Activated B cell treated with CpG ODN at 0.5 μM for 24 hours (primary cell): ENCODE measurements at regions of chr12 and their contacts with region 1.

Region 1: GRCh38 chr12:50167041-50167828 is at the start of gene CERS5:
- DNase-seq: peak; percentile 95
- ATAC-seq: peak; percentile 98
- H3K4me3 Mint-ChIP-seq: peak within 1 kb of the TSS; percentile 92
- H3K27ac Mint-ChIP-seq: peak within 1 kb of the TSS; percentile 90
- H3K4me1 Mint-ChIP-seq: peaks cover 25% of the 10 kb centered on the region
- H3K27me3 Mint-ChIP-seq: no peaks in the 10 kb centered on the region
- CTCF ChIP-seq: no peak
- total RNA-seq, gene CERS5: 44.3 and 64.9 TPM in 2 replicates

Region 2: DNA sequence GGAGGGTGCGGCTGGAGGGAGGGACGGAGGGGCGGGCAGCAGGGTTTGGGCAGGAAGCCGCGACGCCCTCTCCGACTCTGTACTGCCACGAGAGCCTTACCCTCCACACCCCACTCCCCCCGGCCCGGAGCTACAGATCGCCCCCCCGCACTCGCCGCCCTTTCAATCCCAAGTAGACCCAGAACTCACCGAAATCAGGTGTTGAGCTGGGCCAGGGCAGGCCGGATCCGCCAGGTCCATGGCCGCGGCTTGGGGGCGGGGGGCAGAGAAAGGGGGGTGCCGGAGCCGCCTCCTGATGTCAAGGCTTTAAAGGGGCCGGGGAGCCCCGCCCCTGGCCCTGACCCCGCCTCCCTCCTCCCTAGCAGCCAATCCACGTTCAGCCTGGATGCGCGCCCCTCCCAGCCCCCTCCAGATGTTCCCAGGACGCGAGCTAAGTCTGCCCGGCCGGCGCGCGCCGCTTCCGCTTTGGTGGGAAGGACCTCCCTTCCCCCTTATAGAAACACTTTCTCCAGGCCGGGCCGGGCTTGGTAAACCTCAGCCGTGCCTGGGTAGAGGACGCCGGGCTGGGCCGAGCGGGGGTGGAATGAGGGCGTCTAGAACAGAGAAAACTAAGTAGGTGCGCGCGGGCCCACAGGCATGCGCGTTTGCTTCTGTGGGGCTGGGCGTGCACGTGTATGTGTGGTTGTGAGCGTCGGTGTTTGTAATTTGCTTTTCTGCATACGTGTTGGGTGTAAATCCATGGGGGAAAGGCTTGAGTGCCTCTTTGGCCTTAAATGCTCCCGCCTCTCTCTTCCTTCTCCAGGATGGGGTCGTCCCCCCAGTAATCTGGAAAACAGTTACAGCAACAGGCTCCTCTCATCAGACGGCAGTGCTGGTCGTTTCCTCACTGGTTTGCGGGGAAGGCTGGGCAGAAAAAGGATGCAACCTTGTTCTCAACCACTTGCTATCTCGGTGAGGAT is 338.8 kb before region 1 on chr12 and contains the start of gene NCKAP5L:
- CTCF ChIA-PET with region 1: no interaction called
- POLR2A ChIA-PET with region 1: no interaction called
- intact Hi-C with region 1: loop called (anchors 1 kb)
- DNase-seq: peak; percentile 87
- ATAC-seq: peak; percentile 97
- H3K4me3 Mint-ChIP-seq: peak within 1 kb of the TSS; percentile 98
- H3K27ac Mint-ChIP-seq: peak within 1 kb of the TSS; percentile 95
- H3K4me1 Mint-ChIP-seq: peaks cover 37% of the 10 kb centered on the region
- H3K27me3 Mint-ChIP-seq: no peaks in the 10 kb centered on the region
- CTCF ChIP-seq: no peak
- total RNA-seq, gene NCKAP5L: 7.2 and 9.1 TPM in 2 replicates

Region 3: GRCh38 chr12:50025187-50026059 is 141.8 kb before region 1 on chr12 and contains the start of gene RACGAP1:
- CTCF ChIA-PET with region 1: no interaction called
- POLR2A ChIA-PET with region 1: interaction called, 3 read pairs
- intact Hi-C with region 1: loop called (anchors 1 kb)
- DNase-seq: peak; percentile 83
- ATAC-seq: peak; percentile 97
- H3K4me3 Mint-ChIP-seq: peak within 1 kb of the TSS; percentile 96
- H3K27ac Mint-ChIP-seq: peak within 1 kb of the TSS; percentile 79
- H3K4me1 Mint-ChIP-seq: peaks cover 16% of the 10 kb centered on the region
- H3K27me3 Mint-ChIP-seq: no peaks in the 10 kb centered on the region
- CTCF ChIP-seq: no peak
- total RNA-seq, gene RACGAP1: 12.2 and 12.6 TPM in 2 replicates

Region 4: GRCh38 chr12:50084775-50085614 is 82.2 kb before region 1 on chr12 and contains the start of gene SMARCD1:
- CTCF ChIA-PET with region 1: interaction called, 12 read pairs
- POLR2A ChIA-PET with region 1: interaction called, 53 read pairs
- intact Hi-C with region 1: loop called (anchors 1 kb)
- DNase-seq: peak; percentile 82
- ATAC-seq: peak; percentile 86
- H3K4me3 Mint-ChIP-seq: peak within 1 kb of the TSS; percentile 94
- H3K27ac Mint-ChIP-seq: peak within 1 kb of the TSS; percentile 97
- H3K4me1 Mint-ChIP-seq: peaks cover 35% of the 10 kb centered on the region
- H3K27me3 Mint-ChIP-seq: no peaks in the 10 kb centered on the region
- CTCF ChIP-seq: no peak
- total RNA-seq, gene SMARCD1: 101 and 108 TPM in 2 replicates

Region 5: DNA sequence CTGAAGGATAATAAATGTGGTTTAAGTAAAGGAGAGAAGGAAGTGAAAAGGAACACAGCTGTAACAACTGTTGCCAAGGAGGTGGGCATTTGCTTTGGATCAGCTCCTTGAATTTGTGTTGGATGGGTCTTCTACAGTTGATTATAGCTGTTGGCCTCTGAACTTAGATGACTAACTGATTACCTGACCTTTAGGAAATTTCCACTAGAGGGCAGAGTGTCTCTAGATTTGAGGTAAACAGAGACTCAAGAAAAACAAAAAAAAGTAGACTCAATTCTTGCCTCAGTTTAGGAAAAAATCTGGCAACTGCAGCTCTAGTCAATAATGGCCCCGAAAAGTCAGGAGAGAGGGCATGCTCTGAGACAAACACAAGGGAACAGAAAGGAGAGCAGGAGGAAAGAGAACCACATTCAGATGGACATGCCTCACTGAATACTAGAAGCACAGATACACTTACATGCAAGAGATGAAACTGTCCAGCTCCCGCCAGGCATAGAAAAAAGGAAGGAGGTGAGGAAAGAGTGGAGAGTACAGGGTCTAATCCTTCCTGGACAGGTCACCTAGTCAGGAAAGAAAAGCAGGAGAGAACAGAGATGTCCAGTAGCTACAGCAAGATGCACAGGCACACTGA is 34.6 kb before region 1 on chr12:
- CTCF ChIA-PET with region 1: interaction called, 13 read pairs
- POLR2A ChIA-PET with region 1: interaction called, 4 read pairs
- intact Hi-C with region 1: no loop called
- DNase-seq: no peak
- ATAC-seq: no peak
- H3K4me3 Mint-ChIP-seq: no peak overlapping the region
- H3K27ac Mint-ChIP-seq: peak overlapping the region; percentile 7
- H3K4me1 Mint-ChIP-seq: peaks cover 15% of the 10 kb centered on the region
- H3K27me3 Mint-ChIP-seq: no peaks in the 10 kb centered on the region
- CTCF ChIP-seq: no peak

Region 6: DNA sequence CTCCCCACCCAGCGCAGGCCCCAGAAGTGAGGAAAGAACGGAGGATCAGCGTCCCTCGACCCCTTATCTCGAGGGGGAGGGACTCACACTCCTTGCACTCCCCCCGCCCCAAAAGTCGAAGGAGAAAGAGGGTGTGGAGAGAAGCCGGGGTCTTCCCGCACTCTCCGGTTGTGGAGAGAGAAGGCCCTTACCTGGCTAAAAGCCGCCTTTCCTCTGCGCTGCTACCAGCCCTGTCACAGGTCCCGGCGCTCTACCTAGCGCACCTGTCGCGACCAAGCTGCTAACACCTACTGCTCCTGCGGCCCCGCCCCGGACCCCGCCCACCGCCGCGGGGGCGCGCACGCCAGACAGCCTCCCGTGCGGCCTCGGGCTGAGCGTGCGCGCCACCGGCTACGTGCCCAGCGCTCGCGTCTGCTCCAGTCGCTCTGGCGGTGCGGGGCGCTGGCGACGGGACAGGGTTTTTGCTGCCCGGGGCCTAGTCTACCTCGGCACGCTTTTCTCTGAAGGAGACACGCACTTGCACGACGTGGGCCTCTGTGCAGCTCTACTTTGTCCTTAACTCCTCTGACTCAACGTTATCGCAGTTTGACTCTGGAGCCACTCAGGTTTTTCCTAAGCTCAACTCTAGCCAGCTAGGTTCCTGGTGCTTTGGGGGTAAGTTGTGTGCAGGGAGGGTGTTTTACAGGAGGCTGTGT is 116.1 kb after region 1 on chr12 and contains the start of gene LIMA1:
- CTCF ChIA-PET with region 1: no interaction called
- POLR2A ChIA-PET with region 1: no interaction called
- intact Hi-C with region 1: loop called (anchors 10 kb)
- DNase-seq: peak; percentile 95
- ATAC-seq: peak; percentile 97
- H3K4me3 Mint-ChIP-seq: peak within 1 kb of the TSS; percentile 91
- H3K27ac Mint-ChIP-seq: peak within 1 kb of the TSS; percentile 71
- H3K4me1 Mint-ChIP-seq: peaks cover 17% of the 10 kb centered on the region
- H3K27me3 Mint-ChIP-seq: no peaks in the 10 kb centered on the region
- CTCF ChIP-seq: no peak
- total RNA-seq, gene LIMA1: 5.7 and 6.7 TPM in 2 replicates

Region 7: GRCh38 chr12:50314629-50315312 is 147.5 kb after region 1 on chr12:
- CTCF ChIA-PET with region 1: no interaction called
- POLR2A ChIA-PET with region 1: no interaction called
- intact Hi-C with region 1: no loop called
- DNase-seq: no peak
- ATAC-seq: no peak
- H3K4me3 Mint-ChIP-seq: no peak overlapping the region
- H3K27ac Mint-ChIP-seq: no peak overlapping the region
- H3K4me1 Mint-ChIP-seq: no peaks in the 10 kb centered on the region
- H3K27me3 Mint-ChIP-seq: no peaks in the 10 kb centered on the region
- CTCF ChIP-seq: no peak